ENCODE measurements at regions of chr6 and their contacts with region 1.

Region 1: GRCh38 chr6:159968440-159969203 is at the start of gene IGF2R:
- DNase-seq: peak; percentile 96
- total RNA-seq, gene IGF2R: 54.6 TPM

Region 2: DNA sequence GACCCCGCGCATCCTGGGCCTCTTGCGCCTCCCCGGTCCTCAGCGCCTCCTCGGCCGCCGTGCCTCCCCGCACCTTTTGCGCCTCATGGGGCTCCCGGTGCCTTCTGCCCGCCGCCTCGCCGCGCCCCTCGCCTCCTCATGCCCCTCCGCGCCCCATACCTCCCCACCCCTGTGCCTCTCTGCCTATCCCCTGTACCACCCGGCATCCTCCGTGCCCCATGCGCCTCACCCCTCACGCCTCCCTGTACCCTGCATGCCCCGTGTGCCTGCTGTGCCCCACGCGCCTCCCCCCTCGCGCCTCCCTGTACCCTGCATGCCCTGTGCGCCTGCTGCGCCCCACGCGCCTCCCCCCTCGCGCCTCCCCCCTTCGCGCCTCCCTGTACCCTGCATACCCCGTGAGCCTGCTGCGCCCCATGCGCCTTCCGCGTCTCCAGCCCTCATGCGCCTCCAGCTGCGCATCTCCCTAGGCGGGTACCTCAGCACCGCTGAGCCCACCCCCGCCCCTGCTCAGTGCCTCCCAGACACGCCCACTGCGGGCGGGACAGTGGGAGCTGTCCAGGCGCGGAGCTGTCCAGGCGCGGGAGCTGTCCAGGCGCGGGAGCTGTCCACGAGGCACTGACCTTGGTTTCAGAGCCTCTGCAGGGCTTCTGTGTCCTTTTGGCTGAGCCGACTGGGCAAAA is 37.4 kb after region 1 on chr6:
- intact Hi-C with region 1: loop called (anchors 5 kb)
- DNase-seq: no peak

Region 3: GRCh38 chr6:160015778-160016684 is 47.4 kb after region 1 on chr6:
- intact Hi-C with region 1: no loop called
- DNase-seq: no peak

Region 4: DNA sequence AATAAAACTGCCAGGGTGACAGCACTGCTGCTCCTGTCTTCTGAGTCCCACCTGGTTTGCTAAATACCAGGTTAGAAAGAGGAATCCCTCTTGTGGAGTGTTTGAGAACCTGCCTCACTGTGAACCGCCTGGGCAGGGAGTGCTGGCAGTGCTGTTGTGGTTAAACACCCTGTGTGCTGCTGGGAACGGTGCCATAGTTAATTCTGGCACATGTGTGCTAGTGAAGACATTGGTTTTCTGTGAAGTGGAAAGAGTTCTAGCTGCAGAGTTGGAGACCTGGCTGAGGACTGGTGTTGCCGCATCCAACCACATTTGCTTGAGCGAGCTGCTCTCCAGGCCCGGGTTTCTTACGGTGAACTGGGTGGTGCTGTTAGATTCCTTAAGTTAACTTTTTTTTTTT is 73.0 kb after region 1 on chr6:
- intact Hi-C with region 1: loop called (anchors 5 kb)
- DNase-seq: no peak

Region 5: GRCh38 chr6:160088069-160088783 is 119.6 kb after region 1 on chr6:
- intact Hi-C with region 1: no loop called
- DNase-seq: no peak